Right cardiac atrium (tissue), 5 donors: ENCODE measurements at regions of chr15 and their contacts with region 1.

Region 1: DNA sequence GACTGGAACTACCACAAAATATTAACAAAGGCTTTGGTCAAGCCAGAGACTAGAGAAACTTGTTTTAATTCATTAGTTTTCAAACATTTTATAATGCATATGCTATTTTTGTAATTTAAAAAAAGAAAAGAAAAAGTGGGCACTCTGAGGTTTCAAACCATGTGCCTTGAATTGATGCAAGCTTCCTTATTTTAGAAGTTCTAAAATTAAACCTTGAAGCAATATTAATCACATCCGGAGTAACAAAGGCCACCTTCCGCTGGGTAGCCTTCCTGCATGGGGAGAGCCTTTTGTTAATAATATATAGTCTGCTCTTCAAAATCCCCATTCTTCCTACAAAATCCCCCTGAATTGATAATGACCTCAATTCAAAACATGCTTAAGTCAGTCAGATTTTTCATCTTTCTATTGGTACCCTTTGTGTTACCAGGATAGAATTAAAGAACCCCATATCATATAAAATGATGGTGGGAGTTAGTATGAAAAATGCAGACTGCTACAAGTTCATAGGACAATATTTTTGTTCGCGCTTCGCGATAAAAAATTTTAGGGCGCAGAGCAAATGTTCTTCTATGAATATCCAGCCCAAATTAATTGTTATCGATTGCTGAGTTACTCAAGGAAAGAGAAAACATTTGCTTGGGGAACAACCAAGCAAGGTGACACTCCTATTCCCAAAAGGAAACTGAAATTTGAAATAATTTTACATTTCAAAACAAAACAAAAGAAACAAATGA is 30.6 kb downstream of the LDHAL6B start:
- DNase-seq: no peak
- ATAC-seq: no peak
- H3K4me3 ChIP-seq: no peak overlapping the region
- H3K27ac ChIP-seq: no peak overlapping the region
- H3K4me1 ChIP-seq: peaks cover 6% of the 10 kb centered on the region
- H3K27me3 ChIP-seq: no peaks in the 10 kb centered on the region

Region 2: GRCh38 chr15:59259137-59259943 is 22.1 kb after region 1 on chr15:
- intact Hi-C with region 1: loop called in 1 of 4 experiments (anchors 2 kb)
- DNase-seq: no peak
- ATAC-seq: no peak
- H3K4me3 ChIP-seq: no peak overlapping the region
- H3K27ac ChIP-seq: no peak overlapping the region
- H3K4me1 ChIP-seq: no peaks in the 10 kb centered on the region
- H3K27me3 ChIP-seq: no peaks in the 10 kb centered on the region